Posterior vena cava (tissue), 2 donors: ENCODE measurements at regions of chr6 and their contacts with region 1.

Region 1: DNA sequence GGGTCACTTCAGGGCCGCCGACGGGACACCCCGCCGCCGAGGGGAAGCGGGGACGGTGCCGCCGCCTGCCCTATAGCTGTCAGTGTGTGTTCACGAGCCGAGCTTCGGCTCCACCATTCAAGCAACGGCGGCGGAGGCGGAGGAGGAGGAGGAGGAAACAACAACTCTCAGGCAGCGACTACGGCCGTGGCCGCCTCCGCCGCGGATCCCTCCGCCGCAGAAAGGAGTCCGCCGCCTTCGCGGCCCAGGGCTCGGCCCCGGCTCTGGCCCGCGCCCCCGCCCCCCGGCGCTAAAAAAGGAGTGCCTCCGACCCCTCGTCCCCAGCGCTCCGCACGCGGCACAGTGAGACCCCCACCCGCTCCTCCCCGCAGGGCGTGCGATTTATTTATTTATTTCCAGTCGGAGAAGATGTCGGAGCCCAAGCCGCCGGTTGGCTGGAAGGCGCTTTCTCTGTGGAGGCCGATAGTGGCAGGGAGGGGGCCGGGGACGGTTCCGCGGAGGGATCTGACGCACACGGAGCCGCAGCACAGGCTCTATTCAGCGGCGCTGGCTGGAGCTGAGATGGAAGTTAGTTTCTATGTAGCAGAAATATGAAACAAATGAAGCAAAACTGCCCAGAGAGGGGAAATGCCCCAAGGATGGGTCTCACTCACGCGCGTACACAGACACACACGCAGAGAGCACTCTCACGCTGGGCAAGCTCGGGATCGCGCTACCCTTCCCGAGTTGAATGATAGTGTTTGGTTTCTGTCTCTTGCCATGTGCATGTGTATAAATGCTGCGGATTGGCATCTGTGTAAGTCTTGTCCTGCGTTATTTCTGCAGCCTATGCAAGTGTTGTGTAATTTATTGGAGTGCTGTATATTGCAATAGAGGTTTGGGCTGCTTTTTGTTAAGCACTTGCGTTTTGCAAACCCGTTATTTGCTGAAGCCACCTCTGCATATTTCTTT is at the start of gene PHIP:
- DNase-seq: peak; percentile 98
- total RNA-seq, gene PHIP: 25.5 to 27.4 TPM

Region 2: GRCh38 chr6:79233611-79234149 is 155.3 kb after region 1 on chr6:
- intact Hi-C with region 1: loop called in 1 of 2 experiments (anchors 5 kb)
- DNase-seq: peak; percentile 96

Region 3: DNA sequence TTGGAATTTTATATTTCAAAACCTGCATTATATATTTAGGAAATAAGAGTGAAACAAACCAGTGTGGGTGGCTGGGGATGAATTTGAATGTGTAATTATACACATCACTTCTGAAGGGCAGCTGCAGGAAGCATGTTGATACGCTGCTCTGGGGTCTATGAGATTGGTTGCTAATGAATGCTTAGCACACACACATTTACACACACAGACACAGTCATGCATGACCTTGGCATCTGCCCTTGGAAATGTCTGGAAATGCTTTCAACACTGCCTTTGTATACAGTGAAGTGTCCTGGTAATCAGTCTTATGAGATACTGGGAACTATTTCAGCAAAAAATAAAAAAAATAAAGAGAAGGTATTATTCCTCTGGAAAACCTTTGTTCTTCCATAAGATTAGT is 785.7 kb after region 1 on chr6:
- intact Hi-C with region 1: no loop called
- DNase-seq: no peak